Colonic mucosa (tissue), 4 donors: ENCODE measurements at regions of chr17 and their contacts with region 1.

Region 1: DNA sequence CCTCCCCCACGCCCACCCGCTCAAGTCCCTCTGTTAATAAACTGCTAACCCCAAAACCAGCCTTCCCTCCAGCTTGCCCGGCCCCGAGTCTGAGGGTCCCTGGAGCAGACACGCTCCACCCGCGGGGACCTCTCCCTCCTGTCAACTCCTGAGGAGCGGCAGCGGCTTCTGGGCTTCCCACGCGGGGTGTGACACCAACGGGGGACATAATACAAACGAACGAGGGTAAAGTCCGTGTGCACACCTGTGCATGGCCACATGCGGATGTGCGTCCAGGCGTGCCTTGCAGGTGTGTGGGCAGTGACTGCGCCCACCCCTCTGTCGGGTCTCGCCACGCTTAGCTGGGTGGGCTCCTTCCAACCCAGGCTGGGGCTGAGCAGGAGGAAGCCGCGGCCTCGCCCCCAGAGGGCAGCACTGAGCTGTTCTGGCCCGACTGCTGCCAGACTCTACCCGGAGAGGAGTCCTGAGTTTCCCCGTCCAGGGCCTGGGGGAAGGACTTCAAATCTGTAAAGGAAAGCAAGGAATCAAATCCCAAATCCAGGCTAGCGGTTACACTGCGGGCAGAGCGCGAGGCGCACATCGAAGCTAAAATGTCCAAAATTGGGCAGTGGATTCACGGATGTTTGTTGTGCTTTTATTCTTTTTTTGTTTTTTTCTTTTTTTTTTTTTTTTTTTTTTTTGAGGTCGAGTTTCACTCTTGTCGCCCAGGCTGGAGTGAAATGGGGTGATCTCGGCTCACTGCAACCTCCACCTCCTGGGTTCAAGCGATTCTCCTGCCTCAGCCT is 24.2 kb upstream of the KRT17 start:
- DNase-seq: peak; percentile 91
- H3K4me3 ChIP-seq: peak overlapping the region; percentile 29
- H3K27ac ChIP-seq: peak overlapping the region; percentile 76
- H3K4me1 ChIP-seq: peaks cover 26% of the 10 kb centered on the region
- H3K27me3 ChIP-seq: no peaks in the 10 kb centered on the region
- CTCF ChIP-seq: peak; percentile 91

Region 2: GRCh38 chr17:40903129-40904065 is 745.2 kb before region 1 on chr17:
- intact Hi-C with region 1: loop called (anchors 5 kb)
- DNase-seq: peak; percentile 75
- H3K4me3 ChIP-seq: no peak overlapping the region
- H3K27ac ChIP-seq: peak overlapping the region; percentile 81
- H3K4me1 ChIP-seq: no peaks in the 10 kb centered on the region
- H3K27me3 ChIP-seq: no peaks in the 10 kb centered on the region
- CTCF ChIP-seq: no peak

Region 3: GRCh38 chr17:41486809-41487720 is 161.5 kb before region 1 on chr17:
- intact Hi-C with region 1: loop called (anchors 10 kb)
- DNase-seq: peak; percentile 74
- H3K4me3 ChIP-seq: no peak overlapping the region
- H3K27ac ChIP-seq: no peak overlapping the region
- H3K4me1 ChIP-seq: peaks cover 5% of the 10 kb centered on the region
- H3K27me3 ChIP-seq: no peaks in the 10 kb centered on the region
- CTCF ChIP-seq: peak; percentile 58

Region 4: GRCh38 chr17:41579484-41580243 is 68.9 kb before region 1 on chr17:
- intact Hi-C with region 1: loop called (anchors 10 kb)
- DNase-seq: peak; percentile 95
- H3K4me3 ChIP-seq: no peak overlapping the region
- H3K27ac ChIP-seq: no peak overlapping the region
- H3K4me1 ChIP-seq: no peaks in the 10 kb centered on the region
- H3K27me3 ChIP-seq: peaks cover 3% of the 10 kb centered on the region
- CTCF ChIP-seq: peak; percentile 82

Region 5: DNA sequence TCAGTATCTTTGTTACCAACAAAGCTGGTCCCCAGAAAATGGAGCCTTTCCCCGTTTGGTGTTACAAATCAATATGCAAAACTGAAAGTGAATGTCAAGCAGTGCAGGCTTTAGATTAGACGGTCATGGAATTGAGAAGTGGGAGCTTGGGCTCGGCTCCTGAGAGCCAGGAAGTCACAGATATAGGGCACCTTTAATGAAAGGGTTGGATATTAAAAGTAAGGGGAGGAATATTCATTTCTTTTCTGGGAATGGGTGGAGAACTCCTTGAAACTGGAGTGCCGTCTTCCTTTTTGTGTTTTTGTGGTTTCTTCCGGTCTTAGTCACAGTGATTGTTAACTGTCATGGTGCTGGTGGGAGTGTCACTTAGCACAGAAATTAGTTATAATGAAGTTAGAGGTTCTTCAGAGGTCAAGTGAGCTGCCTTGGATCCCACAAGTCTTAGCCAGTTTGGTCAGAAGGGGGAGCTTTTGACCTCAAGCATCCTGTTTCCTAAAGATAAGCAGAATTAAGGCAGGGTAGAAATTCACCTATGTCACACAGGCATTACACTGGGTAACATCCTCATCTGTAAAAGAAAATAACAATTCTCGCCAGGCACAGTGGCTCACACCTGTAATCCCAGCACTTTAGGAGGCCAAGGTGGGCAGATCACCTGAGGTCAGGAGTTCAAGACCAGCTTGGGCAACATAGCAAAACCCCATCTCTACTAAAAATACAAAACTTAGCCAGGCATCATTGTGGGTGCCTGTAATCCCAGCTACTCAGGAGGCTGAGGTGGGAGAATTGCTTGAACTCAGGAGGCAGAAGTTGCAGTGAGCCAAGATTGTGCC is 30.5 kb after region 1 on chr17:
- intact Hi-C with region 1: no loop called
- DNase-seq: peak; percentile 53
- H3K4me3 ChIP-seq: peak overlapping the region; percentile 36
- H3K27ac ChIP-seq: peak overlapping the region; percentile 89
- H3K4me1 ChIP-seq: no peaks in the 10 kb centered on the region
- H3K27me3 ChIP-seq: no peaks in the 10 kb centered on the region
- CTCF ChIP-seq: no peak

Region 6: DNA sequence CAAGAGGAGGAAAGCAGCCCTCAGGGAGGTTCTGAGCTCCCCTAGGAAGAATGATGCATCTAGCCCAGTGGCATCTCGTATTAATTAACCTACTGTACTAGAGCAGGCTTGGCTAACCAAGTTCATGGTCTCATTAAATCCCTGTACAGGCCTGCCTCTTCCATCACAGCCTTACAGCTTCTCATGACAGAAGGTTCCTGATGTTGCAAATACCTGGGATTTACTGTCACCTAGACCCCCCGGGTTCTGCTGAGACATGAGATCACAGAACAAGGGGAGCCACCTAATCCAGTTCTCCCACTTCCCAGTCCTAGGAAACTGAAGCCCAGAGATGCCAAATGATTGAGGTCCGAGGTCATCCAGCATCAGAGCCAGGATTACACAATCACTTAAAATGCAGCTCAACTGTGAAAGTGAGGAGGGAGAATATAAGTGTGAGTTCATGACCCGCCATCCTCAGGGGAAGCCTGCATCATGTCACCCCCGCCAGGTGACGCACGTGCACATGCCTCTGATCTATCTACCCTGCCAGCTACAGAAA is 246.3 kb after region 1 on chr17:
- intact Hi-C with region 1: no loop called
- DNase-seq: no peak
- H3K4me3 ChIP-seq: no peak overlapping the region
- H3K27ac ChIP-seq: no peak overlapping the region
- H3K4me1 ChIP-seq: no peaks in the 10 kb centered on the region
- H3K27me3 ChIP-seq: no peaks in the 10 kb centered on the region
- CTCF ChIP-seq: no peak